A549 (cell line): ENCODE measurements at regions of chr2 and their contacts with region 1.

Region 1: GRCh38 chr2:20264629-20265028 is 39.7 kb upstream of the SDC1 start:
- DNase-seq: no peak
- ATAC-seq: peak in 1 of 2 experiments; percentile 23; a peak in 2 of 6 replicates
- H3K4me3 ChIP-seq: no peak overlapping the region
- H3K27ac ChIP-seq: no peak overlapping the region
- H3K4me1 ChIP-seq: no peaks in the 10 kb centered on the region
- CTCF ChIP-seq: no peak
- EP300 ChIP-seq: no peak
- POLR2A ChIP-seq: no peak
- RAD21 ChIP-seq: no peak

Region 2: DNA sequence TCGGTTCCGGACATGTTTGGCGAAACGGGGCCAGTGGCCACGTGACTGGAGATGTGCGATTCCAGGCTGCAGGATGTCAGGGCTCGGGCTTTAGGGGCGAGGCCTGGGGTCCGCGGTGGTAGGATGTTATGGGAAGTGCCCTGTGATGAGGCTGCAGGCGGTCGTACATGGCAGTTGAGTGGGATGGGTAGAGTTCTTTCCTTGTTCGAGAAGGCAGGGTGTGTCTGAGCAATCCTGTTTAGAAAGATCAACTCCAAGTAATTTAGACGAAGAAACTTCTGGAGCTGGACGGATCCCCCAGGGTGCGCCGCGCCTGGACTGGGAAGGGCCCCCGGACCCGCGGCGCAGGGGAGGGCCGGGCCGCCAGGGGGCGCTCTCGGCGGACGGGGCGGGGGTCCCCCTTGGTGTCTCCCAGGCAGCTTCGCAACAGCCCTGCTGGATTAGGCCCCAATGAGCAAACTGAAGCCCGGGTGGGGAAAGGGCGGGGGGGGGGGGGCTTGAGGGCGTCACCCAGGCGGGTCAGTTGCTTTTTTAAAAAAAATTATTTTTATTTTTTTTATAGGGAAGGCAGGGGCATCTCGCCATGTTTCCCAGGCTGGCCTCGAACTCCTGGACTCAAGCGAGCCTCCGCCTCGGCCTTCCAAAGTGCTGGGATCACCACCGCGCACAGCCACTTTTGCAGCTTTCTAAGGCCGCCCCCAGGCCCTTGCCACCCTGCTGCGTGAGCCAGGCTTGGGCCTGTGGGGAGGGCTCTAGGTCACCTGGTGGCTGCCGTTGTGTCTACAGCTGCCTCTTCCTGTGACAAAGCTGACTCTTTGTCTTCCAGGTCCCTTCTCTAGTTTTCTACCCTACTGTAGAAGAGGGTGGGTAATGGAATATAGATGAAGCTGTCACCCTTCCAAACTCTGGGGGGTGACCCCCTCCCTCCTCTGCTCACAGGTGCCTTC is 22.3 kb before region 1 on chr2:
- CTCF ChIA-PET with region 1: interaction called, 14 read pairs
- POLR2A ChIA-PET with region 1: no interaction called
- DNase-seq: peak in 1 of 2 experiments; percentile 50
- ATAC-seq: peak; percentile 65 to 73
- H3K4me3 ChIP-seq: no peak overlapping the region
- H3K27ac ChIP-seq: no peak overlapping the region
- H3K4me1 ChIP-seq: no peaks in the 10 kb centered on the region
- CTCF ChIP-seq: peak; percentile 58
- EP300 ChIP-seq: no peak
- POLR2A ChIP-seq: no peak
- RAD21 ChIP-seq: 0 out of 5 replicates have a peak, but pooled peaks of 1 of the 2 experiments have one; percentile 23

Region 3: GRCh38 chr2:20282916-20283592 is 18.4 kb after region 1 on chr2:
- CTCF ChIA-PET with region 1: interaction called, 11 read pairs
- POLR2A ChIA-PET with region 1: no interaction called
- DNase-seq: no peak
- ATAC-seq: no peak; a peak in 2 of 6 replicates
- H3K4me3 ChIP-seq: no peak overlapping the region
- H3K27ac ChIP-seq: no peak overlapping the region
- H3K4me1 ChIP-seq: no peaks in the 10 kb centered on the region
- CTCF ChIP-seq: no peak
- EP300 ChIP-seq: no peak
- POLR2A ChIP-seq: no peak
- RAD21 ChIP-seq: no peak

Region 4: DNA sequence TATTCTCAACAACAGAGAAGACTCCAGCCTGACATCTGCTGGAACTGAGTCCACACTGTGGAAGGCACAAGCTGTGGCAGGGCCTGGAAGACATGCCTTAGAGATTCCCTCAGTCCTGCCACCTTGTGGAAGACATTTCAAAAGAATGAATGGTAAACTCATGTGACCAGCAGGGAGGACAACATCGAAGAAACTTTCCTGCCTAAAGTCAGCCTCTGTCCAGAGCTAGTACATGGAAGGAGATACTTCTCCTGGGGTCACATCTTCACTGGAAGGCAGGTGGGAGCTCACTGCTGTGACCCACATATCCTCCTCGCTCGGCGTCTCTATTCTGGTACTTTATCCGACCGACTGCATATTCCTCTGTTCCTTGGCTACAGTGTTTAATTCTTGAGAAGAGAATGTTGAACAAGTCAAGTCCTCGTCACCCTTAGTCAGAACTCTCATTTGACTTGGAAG is 26.5 kb after region 1 on chr2:
- CTCF ChIA-PET with region 1: interaction called, 11 read pairs
- POLR2A ChIA-PET with region 1: no interaction called
- DNase-seq: peak; percentile 91 to 93
- ATAC-seq: peak; percentile 100
- H3K4me3 ChIP-seq: no peak overlapping the region
- H3K27ac ChIP-seq: peak overlapping the region in 1 of 2 experiments; percentile 33; a peak in 1 of 6 replicates
- H3K4me1 ChIP-seq: peaks cover 23% of the 10 kb centered on the region
- CTCF ChIP-seq: peak; percentile 94
- EP300 ChIP-seq: no peak
- POLR2A ChIP-seq: no peak
- RAD21 ChIP-seq: peak; percentile 63 to 64

Region 5: GRCh38 chr2:20986024-20986939 is 721.7 kb after region 1 on chr2:
- CTCF ChIA-PET with region 1: no interaction called
- POLR2A ChIA-PET with region 1: no interaction called
- DNase-seq: no peak
- ATAC-seq: no peak
- H3K4me3 ChIP-seq: no peak overlapping the region
- H3K27ac ChIP-seq: no peak overlapping the region
- H3K4me1 ChIP-seq: no peaks in the 10 kb centered on the region
- CTCF ChIP-seq: no peak
- EP300 ChIP-seq: no peak
- POLR2A ChIP-seq: no peak
- RAD21 ChIP-seq: no peak